Activated CD4-positive, alpha-beta T cell treated with anti-CD3 and anti-CD28 coated beads, Interleukin-2, amount 10 ng/mL, durations not matched to agents 7 days and 5 days (primary cell): ENCODE measurements at regions of chr12 and their contacts with region 1.

Region 1: DNA sequence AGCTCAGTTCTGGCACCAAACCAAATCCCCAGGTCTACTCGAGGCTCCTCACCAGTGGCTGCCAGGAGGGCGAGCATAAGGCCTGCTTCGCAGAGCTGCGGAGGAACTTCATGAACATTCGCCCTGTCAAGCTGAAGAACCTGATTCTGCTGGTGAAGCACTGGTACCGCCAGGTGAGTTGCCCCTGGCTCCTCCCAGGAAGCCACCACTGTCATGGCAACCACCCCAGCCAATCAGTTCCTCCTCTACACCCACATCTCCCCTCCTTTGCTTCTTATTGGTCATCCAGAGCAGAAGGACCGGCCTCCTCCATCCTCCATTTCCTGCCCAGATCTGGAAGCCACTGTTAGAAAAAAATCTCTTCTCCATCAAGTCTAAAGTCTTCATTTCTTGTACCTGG is 17.2 kb upstream of the OAS2 start:
- DNase-seq: peak; percentile 43
- H3K4me3 Mint-ChIP-seq: no peak overlapping the region
- H3K27ac Mint-ChIP-seq: no peak overlapping the region
- H3K4me1 Mint-ChIP-seq: peaks cover 39% of the 10 kb centered on the region
- H3K27me3 Mint-ChIP-seq: no peaks in the 10 kb centered on the region

Region 2: GRCh38 chr12:112862636-112863290 is 98.3 kb before region 1 on chr12:
- CTCF ChIA-PET with region 1: no interaction called
- POLR2A ChIA-PET with region 1: no interaction called
- DNase-seq: no peak
- H3K4me3 Mint-ChIP-seq: no peak overlapping the region
- H3K27ac Mint-ChIP-seq: no peak overlapping the region
- H3K4me1 Mint-ChIP-seq: peaks cover 6% of the 10 kb centered on the region
- H3K27me3 Mint-ChIP-seq: peaks cover 14% of the 10 kb centered on the region

Region 3: DNA sequence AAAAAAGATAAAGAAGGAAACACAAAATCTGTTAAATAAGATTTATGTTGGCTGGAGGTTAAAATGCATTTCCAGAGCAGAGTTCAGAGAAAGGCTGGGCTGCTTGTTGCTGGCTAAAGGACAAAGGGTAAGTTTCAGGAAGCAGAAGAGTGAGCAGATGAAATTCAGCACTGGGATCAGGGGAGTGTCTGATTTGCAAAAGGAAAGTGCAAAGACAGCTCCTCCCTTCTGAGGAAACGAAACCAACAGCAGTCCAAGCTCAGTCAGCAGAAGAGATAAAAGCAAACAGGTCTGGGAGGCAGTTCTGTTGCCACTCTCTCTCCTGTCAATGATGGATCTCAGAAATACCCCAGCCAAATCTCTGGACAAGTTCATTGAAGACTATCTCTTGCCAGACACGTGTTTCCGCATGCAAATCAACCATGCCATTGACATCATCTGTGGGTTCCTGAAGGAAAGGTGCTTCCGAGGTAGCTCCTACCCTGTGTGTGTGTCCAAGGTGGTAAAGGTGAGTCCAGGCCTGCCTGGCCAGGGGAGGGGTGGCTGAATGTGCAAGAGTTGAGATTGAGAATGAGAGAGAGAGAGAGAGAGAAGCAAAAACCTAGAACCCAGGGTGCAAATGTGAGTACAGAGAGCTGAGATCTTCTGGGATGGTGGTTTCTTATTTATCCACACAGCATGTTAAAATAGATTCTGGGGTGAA is 54.2 kb before region 1 on chr12 and contains the start of gene OAS1:
- CTCF ChIA-PET with region 1: no interaction called
- POLR2A ChIA-PET with region 1: no interaction called
- DNase-seq: peak; percentile 75
- H3K4me3 Mint-ChIP-seq: peak within 1 kb of the TSS; percentile 98
- H3K27ac Mint-ChIP-seq: peak within 1 kb of the TSS; percentile 98
- H3K4me1 Mint-ChIP-seq: peaks cover 75% of the 10 kb centered on the region
- H3K27me3 Mint-ChIP-seq: no peaks in the 10 kb centered on the region
- total RNA-seq, gene OAS1: 194 to 197 TPM

Region 4: GRCh38 chr12:112950701-112951100 is 10.4 kb before region 1 on chr12:
- CTCF ChIA-PET with region 1: interaction called, 13 read pairs
- POLR2A ChIA-PET with region 1: no interaction called
- DNase-seq: no peak
- H3K4me3 Mint-ChIP-seq: no peak overlapping the region
- H3K27ac Mint-ChIP-seq: no peak overlapping the region
- H3K4me1 Mint-ChIP-seq: peaks cover 29% of the 10 kb centered on the region
- H3K27me3 Mint-ChIP-seq: no peaks in the 10 kb centered on the region

Region 5: GRCh38 chr12:113086249-113087164 is 125.4 kb after region 1 on chr12:
- CTCF ChIA-PET with region 1: no interaction called
- POLR2A ChIA-PET with region 1: no interaction called
- DNase-seq: peak; percentile 24
- H3K4me3 Mint-ChIP-seq: peak overlapping the region; percentile 22
- H3K27ac Mint-ChIP-seq: peak overlapping the region; percentile 65
- H3K4me1 Mint-ChIP-seq: peaks cover 50% of the 10 kb centered on the region
- H3K27me3 Mint-ChIP-seq: no peaks in the 10 kb centered on the region